ENCODE measurements at regions of chr1 and their contacts with region 1.

Region 1: DNA sequence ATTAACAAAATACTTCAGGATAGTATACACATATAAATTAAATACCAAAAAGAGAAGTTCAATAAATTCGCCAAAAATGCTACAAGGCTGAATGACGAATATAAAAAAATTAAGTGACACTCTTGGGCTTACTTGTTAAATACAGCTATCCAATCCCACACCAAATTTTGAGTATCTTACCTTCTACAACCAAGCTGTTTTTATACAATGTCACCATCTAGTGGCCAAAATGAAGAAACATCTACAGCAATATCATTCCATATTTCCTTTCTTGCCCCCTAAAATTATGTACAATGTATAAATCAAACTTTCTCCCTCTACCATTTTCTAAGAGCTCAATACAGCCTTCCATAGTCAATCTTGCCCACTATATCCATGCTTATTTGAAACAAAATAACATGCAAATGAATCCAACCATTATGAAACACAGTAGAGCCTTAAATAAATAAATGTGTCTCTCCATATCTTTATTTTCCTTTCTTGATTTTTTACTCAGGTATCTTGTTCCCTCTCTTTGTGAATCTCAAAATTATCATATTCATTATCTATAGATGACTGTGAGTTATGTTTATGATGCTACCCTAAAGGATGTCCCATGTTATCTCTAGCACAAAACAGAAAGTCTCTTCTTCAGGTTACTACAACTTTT is 86.3 kb downstream of the ACBD6 start:
- DNase-seq: peak; percentile 41
- ATAC-seq: peak; percentile 73; the same call in 1 of the 2 replicates
- H3K4me3 ChIP-seq: no peak overlapping the region
- H3K27ac ChIP-seq: no peak overlapping the region
- H3K4me1 ChIP-seq: no peaks in the 10 kb centered on the region
- H3K27me3 ChIP-seq: no peaks in the 10 kb centered on the region
- CTCF ChIP-seq: peak; percentile 74; the same call in 1 of the 2 replicates

Region 2: GRCh38 chr1:180188091-180188506 is 228.0 kb before region 1 on chr1:
- CTCF ChIA-PET with region 1: interaction called, 14 read pairs
- POLR2A ChIA-PET with region 1: no interaction called
- in situ Hi-C with region 1: no loop called
- intact Hi-C with region 1: loop called (anchors 1 kb)
- DNase-seq: peak; percentile 15
- ATAC-seq: peak; percentile 95
- H3K4me3 ChIP-seq: no peak overlapping the region
- H3K27ac ChIP-seq: no peak overlapping the region
- H3K4me1 ChIP-seq: no peaks in the 10 kb centered on the region
- H3K27me3 ChIP-seq: no peaks in the 10 kb centered on the region
- CTCF ChIP-seq: peak; percentile 94

Region 3: GRCh38 chr1:180252638-180253536 is 163.2 kb before region 1 on chr1:
- CTCF ChIA-PET with region 1: interaction called, 3 read pairs
- POLR2A ChIA-PET with region 1: no interaction called
- in situ Hi-C with region 1: no loop called
- intact Hi-C with region 1: loop called (anchors 2 kb)
- DNase-seq: peak; percentile 58
- ATAC-seq: peak; percentile 73
- H3K4me3 ChIP-seq: no peak overlapping the region
- H3K27ac ChIP-seq: no peak overlapping the region
- H3K4me1 ChIP-seq: no peaks in the 10 kb centered on the region
- H3K27me3 ChIP-seq: no peaks in the 10 kb centered on the region
- CTCF ChIP-seq: peak; percentile 93

Region 4: DNA sequence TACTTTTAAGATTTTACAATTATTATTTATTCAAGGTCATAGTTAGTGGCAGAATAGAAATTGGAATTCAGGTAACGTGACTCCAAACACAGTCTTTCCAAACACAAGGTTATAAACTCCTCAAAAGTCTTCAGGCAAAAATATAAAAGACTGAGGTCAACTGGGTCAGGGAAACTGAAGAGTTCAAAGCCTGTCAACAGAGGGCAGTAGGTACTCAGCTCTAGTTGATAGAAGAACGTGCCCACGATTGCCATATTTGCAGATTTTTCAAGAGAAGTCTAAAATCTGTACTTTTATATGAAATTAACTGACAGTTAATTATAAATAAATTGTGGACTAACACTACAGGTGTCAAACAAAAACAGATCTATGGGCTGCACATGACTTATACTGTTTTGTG is 51.1 kb before region 1 on chr1:
- CTCF ChIA-PET with region 1: no interaction called
- POLR2A ChIA-PET with region 1: no interaction called
- in situ Hi-C with region 1: no loop called
- intact Hi-C with region 1: no loop called
- DNase-seq: no peak
- ATAC-seq: no peak
- H3K4me3 ChIP-seq: no peak overlapping the region
- H3K27ac ChIP-seq: no peak overlapping the region
- H3K4me1 ChIP-seq: no peaks in the 10 kb centered on the region; the same call in 1 of the 2 replicates
- H3K27me3 ChIP-seq: no peaks in the 10 kb centered on the region
- CTCF ChIP-seq: peak; percentile 53; the same call in 1 of the 2 replicates

Region 5: DNA sequence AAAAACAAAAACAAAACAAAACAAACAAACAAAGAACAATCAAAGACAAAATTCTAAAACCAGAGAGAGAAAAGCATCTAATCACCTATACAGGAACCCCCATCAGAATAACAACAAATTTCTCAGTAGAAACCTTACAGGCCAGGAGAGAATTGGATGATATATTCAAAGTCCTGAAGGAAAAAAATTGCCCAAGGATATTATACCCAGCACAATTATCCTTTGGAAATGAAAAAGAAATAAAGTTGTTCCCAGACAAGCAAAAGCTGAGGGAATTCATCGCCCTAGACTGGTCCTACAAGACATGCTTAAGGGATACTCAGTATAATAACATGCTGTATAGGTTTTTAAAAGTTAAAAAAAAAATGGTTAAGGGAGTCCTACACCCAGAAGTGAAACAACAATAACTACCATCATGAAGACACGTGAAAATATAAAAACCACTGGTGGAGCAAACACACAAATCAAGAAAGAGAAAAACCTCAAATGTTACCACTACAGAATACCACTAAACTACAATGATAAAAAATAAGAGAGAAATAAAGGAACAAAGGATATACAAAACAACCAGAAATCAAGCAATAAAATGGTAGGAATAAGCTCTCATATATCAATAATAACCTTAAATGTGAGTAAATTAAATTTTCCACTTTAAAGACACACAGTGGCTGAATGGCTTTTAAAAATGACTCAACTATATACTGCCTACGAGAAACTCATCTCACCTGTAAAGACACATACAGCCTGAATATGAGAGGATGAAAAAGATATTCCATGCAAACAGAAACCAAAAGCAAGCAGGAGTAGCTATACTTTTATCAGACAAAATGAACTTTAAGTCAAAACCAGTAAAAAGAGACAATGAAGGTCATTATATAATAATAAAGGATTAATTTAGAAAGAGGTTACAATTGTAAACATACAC is 35.6 kb before region 1 on chr1:
- CTCF ChIA-PET with region 1: no interaction called
- POLR2A ChIA-PET with region 1: no interaction called
- in situ Hi-C with region 1: no loop called
- intact Hi-C with region 1: no loop called
- DNase-seq: no peak
- ATAC-seq: no peak
- H3K4me3 ChIP-seq: no peak overlapping the region
- H3K27ac ChIP-seq: no peak overlapping the region
- H3K4me1 ChIP-seq: no peaks in the 10 kb centered on the region
- H3K27me3 ChIP-seq: no peaks in the 10 kb centered on the region
- CTCF ChIP-seq: no peak

Region 6: GRCh38 chr1:181846681-181847080 is 1430.6 kb after region 1 on chr1:
- CTCF ChIA-PET with region 1: no interaction called
- POLR2A ChIA-PET with region 1: no interaction called
- in situ Hi-C with region 1: no loop called
- intact Hi-C with region 1: no loop called
- DNase-seq: no peak
- ATAC-seq: no peak
- H3K4me3 ChIP-seq: no peak overlapping the region
- H3K27ac ChIP-seq: no peak overlapping the region
- H3K4me1 ChIP-seq: no peaks in the 10 kb centered on the region
- H3K27me3 ChIP-seq: no peaks in the 10 kb centered on the region
- CTCF ChIP-seq: no peak

Measured in Panc1 (cell line).